ENCODE measurements at regions of chr19 and their contacts with region 1.

Region 1: DNA sequence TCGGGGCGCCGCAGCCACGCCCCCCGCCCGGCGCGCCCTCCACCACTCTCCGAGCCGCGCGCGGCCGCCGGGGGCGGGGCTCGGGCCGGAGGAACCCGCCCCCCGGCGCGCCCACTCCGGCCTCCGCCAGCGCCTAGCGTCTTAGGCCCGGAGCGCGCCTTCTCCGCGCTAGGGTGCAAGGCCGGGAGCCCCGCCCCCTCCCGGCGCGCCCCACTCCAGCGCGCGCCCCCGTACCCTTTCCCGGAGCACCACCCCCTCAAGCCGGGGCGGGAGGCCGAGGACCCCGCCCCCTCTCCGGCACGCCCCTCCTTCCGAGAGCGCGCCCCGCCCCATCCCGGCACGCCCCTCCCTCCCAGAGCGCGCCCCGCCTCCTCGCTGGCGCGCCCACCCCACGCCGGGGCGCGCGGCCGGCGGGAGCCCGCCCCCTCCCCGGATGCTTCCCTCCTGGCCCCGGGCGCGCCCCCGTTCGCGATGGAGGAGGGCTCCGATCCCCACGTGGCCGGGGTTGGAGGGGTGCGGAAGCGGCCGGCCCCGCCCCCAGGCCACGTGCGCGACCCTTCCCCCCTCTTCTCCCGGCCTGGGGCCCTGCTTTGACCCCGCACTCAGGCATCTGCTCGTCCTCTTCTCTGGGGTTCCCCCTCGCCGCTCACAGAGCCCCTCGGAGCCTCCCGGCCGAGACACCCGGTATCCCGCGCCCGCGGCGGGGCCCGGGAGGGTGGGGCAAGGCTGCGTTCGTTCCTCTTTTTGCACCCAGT is 524 bp upstream of the KLF16 start:
- DNase-seq: peak; percentile 94
- H3K4me3 Mint-ChIP-seq: peak overlapping the region; percentile 73
- H3K27ac Mint-ChIP-seq: peak overlapping the region; percentile 87
- H3K4me1 Mint-ChIP-seq: peaks cover 45% of the 10 kb centered on the region
- H3K27me3 Mint-ChIP-seq: no peaks in the 10 kb centered on the region

Region 2: DNA sequence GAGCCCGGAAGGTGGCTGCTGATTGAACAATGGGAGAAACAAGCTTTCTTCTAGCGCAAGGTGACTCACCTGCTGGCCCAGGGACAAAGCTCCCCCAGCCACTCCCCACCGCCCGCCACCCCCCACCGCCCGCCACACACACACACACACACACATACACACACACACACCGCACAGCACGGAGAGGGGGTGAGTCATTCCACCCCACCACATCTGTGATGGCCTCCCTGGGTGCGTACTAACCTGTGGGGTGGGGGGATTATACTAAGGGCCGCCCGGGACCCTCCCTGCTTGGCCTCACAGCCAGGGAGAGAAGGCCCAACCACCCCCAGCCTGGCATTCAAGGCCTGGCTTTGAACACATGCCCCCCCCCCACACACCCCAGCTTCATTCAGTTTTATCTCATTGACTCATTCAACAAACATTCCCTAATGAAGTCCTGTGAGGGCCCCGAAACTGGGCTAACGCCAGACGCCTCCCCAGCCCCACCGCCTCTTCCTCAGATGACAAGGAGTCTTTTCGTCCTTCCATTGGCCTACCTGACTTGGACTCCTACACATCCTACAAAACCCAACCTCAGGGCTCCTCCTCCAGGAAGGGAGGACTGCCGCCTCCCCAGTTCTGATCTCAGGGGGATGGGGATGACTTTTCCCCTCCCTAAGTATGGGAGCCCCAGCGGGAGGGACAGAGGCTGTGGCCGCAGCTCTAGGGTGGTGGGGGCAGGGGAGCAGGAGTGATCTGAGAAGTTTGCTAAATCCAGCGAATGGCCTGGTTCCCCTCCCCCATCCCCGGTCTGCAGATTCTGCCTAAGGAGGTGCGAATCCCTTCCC is 116.4 kb before region 1 on chr19:
- CTCF ChIA-PET with region 1: no interaction called
- DNase-seq: peak; percentile 45
- H3K4me3 Mint-ChIP-seq: peak overlapping the region; percentile 43
- H3K27ac Mint-ChIP-seq: no peak overlapping the region
- H3K4me1 Mint-ChIP-seq: peaks cover 20% of the 10 kb centered on the region
- H3K27me3 Mint-ChIP-seq: peaks cover 96% of the 10 kb centered on the region

Region 3: GRCh38 chr19:1875646-1876495 is 12.0 kb after region 1 on chr19:
- CTCF ChIA-PET with region 1: interaction called, 15 read pairs
- DNase-seq: peak; percentile 92
- H3K4me3 Mint-ChIP-seq: peak overlapping the region; percentile 100
- H3K27ac Mint-ChIP-seq: peak overlapping the region; percentile 98
- H3K4me1 Mint-ChIP-seq: peaks cover 35% of the 10 kb centered on the region
- H3K27me3 Mint-ChIP-seq: peaks cover 4% of the 10 kb centered on the region

Region 4: GRCh38 chr19:1896508-1896907 is 32.6 kb after region 1 on chr19:
- CTCF ChIA-PET with region 1: interaction called, 21 read pairs
- DNase-seq: no peak
- H3K4me3 Mint-ChIP-seq: peak overlapping the region; percentile 79
- H3K27ac Mint-ChIP-seq: peak overlapping the region; percentile 98
- H3K4me1 Mint-ChIP-seq: peaks cover 51% of the 10 kb centered on the region
- H3K27me3 Mint-ChIP-seq: no peaks in the 10 kb centered on the region